CD14-positive monocyte (primary cell): ENCODE measurements at regions of chr11 and their contacts with region 1.

Region 1: DNA sequence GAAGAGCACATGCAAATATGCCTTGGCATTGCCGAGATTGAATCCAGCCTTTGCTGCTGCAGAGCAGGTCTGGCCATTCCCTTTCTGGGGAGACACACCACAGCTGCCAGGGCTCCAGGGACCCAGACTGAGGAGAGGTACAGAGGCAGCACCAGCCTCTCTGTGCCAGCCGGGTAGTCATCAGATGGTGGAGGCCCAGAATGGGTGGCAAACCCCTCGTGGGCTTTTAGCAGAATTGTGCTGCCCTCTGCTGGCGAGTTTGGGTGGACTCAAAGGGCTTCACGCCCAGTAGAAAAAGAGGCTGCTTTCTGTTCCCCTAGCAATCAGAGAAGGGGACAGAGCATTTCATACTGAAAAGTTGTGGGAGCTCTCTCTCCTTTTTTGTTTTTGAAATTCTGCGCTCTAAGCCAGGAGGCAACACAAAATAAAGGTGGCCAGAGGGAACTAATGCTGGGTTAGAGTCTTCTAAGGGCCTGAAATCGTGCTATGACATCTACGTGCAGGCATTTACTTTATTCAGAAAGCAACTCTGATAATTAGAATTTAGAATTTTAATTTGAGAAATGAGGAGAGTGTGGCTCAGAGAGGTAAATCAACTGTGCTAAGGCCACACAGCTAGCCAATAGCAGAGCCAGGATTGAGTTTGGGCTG is 158.8 kb upstream of the NAV2 start:
- DNase-seq: peak; percentile 27 to 53 (median 28)
- H3K4me3 ChIP-seq: no peak overlapping the region
- H3K4me3 Mint-ChIP-seq: no peak overlapping the region
- H3K27ac ChIP-seq: no peak overlapping the region
- H3K27ac Mint-ChIP-seq: no peak overlapping the region
- H3K4me1 ChIP-seq: no peaks in the 10 kb centered on the region
- H3K4me1 Mint-ChIP-seq: peaks cover 2% of the 10 kb centered on the region
- H3K27me3 ChIP-seq: no peaks in the 10 kb centered on the region
- H3K27me3 Mint-ChIP-seq: peaks cover 2 to 7% (median 5%) of the 10 kb centered on the region in 3 donors
- CTCF ChIP-seq: peak; percentile 92

Region 2: GRCh38 chr11:19071255-19071654 is 482.6 kb before region 1 on chr11:
- intact Hi-C with region 1: loop called (anchors 5 kb)
- DNase-seq: peak; percentile 35 to 68 (median 63)
- H3K4me3 ChIP-seq: no peak overlapping the region
- H3K4me3 Mint-ChIP-seq: peak overlapping the region in 1 of 2 donors; percentile 83
- H3K27ac ChIP-seq: no peak overlapping the region
- H3K27ac Mint-ChIP-seq: no peak overlapping the region
- H3K4me1 ChIP-seq: no peaks in the 10 kb centered on the region
- H3K4me1 Mint-ChIP-seq: peaks cover 5% of the 10 kb centered on the region
- H3K27me3 ChIP-seq: peaks cover 0 to 2% of the 10 kb centered on the region in 2 donors
- H3K27me3 Mint-ChIP-seq: peaks cover 2 to 12% (median 3%) of the 10 kb centered on the region in 3 donors
- CTCF ChIP-seq: peak; percentile 97

Region 3: DNA sequence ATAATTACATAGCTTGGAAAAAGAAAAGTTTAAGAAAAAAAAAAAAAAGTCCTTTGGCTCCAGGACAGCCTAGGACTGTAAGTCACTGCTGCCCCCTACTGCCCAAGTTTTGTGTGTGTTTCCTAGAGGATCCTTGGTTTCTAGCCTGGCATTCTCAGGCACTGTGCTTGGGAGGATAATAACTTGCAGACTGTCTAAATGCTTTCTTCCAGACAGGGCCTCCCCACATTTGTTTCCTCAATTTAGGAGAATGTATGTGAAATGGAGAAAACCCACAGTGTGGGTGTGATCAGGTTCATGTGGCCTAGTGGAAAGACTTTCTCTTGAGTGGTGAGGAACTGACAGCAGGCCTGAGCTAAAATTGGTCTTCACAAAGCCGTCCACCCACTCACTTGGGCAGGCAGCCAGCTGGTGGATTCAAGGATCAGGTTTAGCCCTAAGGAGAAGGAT is 349.8 kb after region 1 on chr11:
- intact Hi-C with region 1: loop called (anchors 5 kb)
- DNase-seq: peak in 2 of 3 donors; percentile 13 to 23
- H3K4me3 ChIP-seq: no peak overlapping the region
- H3K4me3 Mint-ChIP-seq: no peak overlapping the region
- H3K27ac ChIP-seq: no peak overlapping the region
- H3K27ac Mint-ChIP-seq: no peak overlapping the region
- H3K4me1 ChIP-seq: no peaks in the 10 kb centered on the region
- H3K4me1 Mint-ChIP-seq: no peaks in the 10 kb centered on the region
- H3K27me3 ChIP-seq: no peaks in the 10 kb centered on the region
- H3K27me3 Mint-ChIP-seq: peaks cover 0 to 5% (median 0%) of the 10 kb centered on the region in 3 donors
- CTCF ChIP-seq: peak; percentile 65